ENCODE measurements at regions of chr4 and their contacts with region 1.

Region 1: GRCh38 chr4:123396307-123397143 is at the start of gene SPRY1:
- DNase-seq: peak; percentile 66
- ATAC-seq: peak; percentile 49
- H3K4me3 ChIP-seq: peak within 1 kb of the TSS; percentile 63
- H3K27ac ChIP-seq: no peak within 1 kb of the TSS
- H3K4me1 ChIP-seq: peaks cover 7% of the 10 kb centered on the region; the same call in 1 of the 2 replicates
- H3K27me3 ChIP-seq: peaks cover 6 to 11% of the 10 kb centered on the region in 2 experiments; a peak in 3 of 4 replicates
- CTCF ChIP-seq: no peak
- EP300 ChIP-seq: no peak
- POLR2A ChIP-seq: no peak
- RAD21 ChIP-seq: no peak
- polyA plus RNA-seq, gene SPRY1: 0.05 TPM in 1 of 2 experiments, not detected in the other

Region 2: DNA sequence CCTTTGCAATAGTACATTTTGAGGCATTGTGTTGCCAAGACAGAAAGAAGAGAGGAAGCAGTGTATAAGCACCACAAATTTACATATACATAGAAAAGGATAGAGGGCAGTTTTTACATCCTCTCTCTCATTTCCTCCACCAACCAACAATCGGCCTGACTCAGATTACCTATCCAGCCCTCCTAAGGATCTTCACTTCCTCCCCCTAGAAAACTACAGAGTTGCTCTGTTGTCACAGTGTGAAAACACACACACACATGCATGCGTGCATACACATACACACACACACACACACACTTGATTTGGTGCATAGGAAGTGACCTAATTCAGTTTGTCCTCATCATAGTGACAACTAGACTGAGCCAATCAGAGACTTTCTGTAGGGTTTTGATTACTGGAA is 98.7 kb before region 1 on chr4:
- CTCF ChIA-PET with region 1: no interaction called
- POLR2A ChIA-PET with region 1: no interaction called
- RAD21 ChIA-PET with region 1: no interaction called
- SMC1A ChIA-PET with region 1: no interaction called
- in situ Hi-C with region 1: no loop called
- intact Hi-C with region 1: no loop called
- DNase-seq: no peak
- ATAC-seq: peak; percentile 45
- H3K4me3 ChIP-seq: no peak overlapping the region
- H3K27ac ChIP-seq: no peak overlapping the region
- H3K4me1 ChIP-seq: no peaks in the 10 kb centered on the region
- H3K27me3 ChIP-seq: no peaks in the 10 kb centered on the region
- CTCF ChIP-seq: no peak
- EP300 ChIP-seq: no peak
- POLR2A ChIP-seq: no peak
- RAD21 ChIP-seq: no peak

Region 3: GRCh38 chr4:123352240-123352945 is 44.1 kb before region 1 on chr4:
- CTCF ChIA-PET with region 1: no interaction called
- POLR2A ChIA-PET with region 1: no interaction called
- RAD21 ChIA-PET with region 1: no interaction called
- SMC1A ChIA-PET with region 1: no interaction called
- in situ Hi-C with region 1: no loop called
- intact Hi-C with region 1: no loop called
- DNase-seq: no peak
- ATAC-seq: no peak; the same call in 2 of the 3 replicates
- H3K4me3 ChIP-seq: no peak overlapping the region
- H3K27ac ChIP-seq: no peak overlapping the region
- H3K4me1 ChIP-seq: no peaks in the 10 kb centered on the region
- H3K27me3 ChIP-seq: no peaks in the 10 kb centered on the region; a peak in 1 of 4 replicates
- CTCF ChIP-seq: no peak
- EP300 ChIP-seq: no peak
- POLR2A ChIP-seq: no peak
- RAD21 ChIP-seq: no peak

Region 4: DNA sequence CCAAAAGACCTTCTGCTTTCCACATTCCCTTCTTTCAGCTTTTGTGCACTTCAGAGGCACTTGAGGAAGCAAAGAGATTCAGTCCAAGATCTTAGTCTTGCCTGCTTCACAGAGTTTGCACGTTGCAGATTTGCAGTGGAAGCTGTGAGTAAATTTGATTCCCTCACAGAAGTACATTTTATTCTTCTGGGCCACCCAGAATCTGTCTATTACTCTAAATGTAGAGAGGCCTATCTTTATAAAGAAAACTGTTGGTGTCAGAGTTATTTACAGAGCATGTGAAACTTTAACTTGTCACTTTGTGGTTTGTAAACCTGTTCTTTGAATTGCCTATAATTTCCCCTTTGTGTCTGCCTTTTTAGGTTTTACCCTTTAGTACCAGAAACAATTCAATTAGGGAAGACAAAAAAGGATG is 15.6 kb after region 1 on chr4:
- CTCF ChIA-PET with region 1: interaction called, 67 read pairs
- POLR2A ChIA-PET with region 1: interaction called, 21 read pairs
- RAD21 ChIA-PET with region 1: interaction called, 66 read pairs
- SMC1A ChIA-PET with region 1: interaction called, 45 read pairs
- in situ Hi-C with region 1: no loop called
- intact Hi-C with region 1: no loop called
- DNase-seq: peak; percentile 66
- ATAC-seq: peak; percentile 90
- H3K4me3 ChIP-seq: no peak overlapping the region
- H3K27ac ChIP-seq: peak overlapping the region; percentile 34; the same call in 1 of the 2 replicates
- H3K4me1 ChIP-seq: peaks cover 17% of the 10 kb centered on the region
- H3K27me3 ChIP-seq: no peaks in the 10 kb centered on the region
- CTCF ChIP-seq: no peak
- EP300 ChIP-seq: peak in 1 of 2 experiments; percentile 64; a peak in 2 of 4 replicates
- POLR2A ChIP-seq: no peak
- RAD21 ChIP-seq: no peak

Region 5: GRCh38 chr4:123423819-123424218 is 27.3 kb after region 1 on chr4:
- CTCF ChIA-PET with region 1: interaction called, 12 read pairs
- POLR2A ChIA-PET with region 1: interaction called, 3 read pairs
- RAD21 ChIA-PET with region 1: interaction called, 16 read pairs
- SMC1A ChIA-PET with region 1: interaction called, 16 read pairs
- in situ Hi-C with region 1: no loop called
- intact Hi-C with region 1: no loop called
- DNase-seq: no peak
- ATAC-seq: no peak
- H3K4me3 ChIP-seq: no peak overlapping the region
- H3K27ac ChIP-seq: no peak overlapping the region
- H3K4me1 ChIP-seq: peaks cover 5% of the 10 kb centered on the region; the same call in 1 of the 2 replicates
- H3K27me3 ChIP-seq: no peaks in the 10 kb centered on the region
- CTCF ChIP-seq: no peak
- EP300 ChIP-seq: no peak
- POLR2A ChIP-seq: no peak
- RAD21 ChIP-seq: no peak

Region 6: DNA sequence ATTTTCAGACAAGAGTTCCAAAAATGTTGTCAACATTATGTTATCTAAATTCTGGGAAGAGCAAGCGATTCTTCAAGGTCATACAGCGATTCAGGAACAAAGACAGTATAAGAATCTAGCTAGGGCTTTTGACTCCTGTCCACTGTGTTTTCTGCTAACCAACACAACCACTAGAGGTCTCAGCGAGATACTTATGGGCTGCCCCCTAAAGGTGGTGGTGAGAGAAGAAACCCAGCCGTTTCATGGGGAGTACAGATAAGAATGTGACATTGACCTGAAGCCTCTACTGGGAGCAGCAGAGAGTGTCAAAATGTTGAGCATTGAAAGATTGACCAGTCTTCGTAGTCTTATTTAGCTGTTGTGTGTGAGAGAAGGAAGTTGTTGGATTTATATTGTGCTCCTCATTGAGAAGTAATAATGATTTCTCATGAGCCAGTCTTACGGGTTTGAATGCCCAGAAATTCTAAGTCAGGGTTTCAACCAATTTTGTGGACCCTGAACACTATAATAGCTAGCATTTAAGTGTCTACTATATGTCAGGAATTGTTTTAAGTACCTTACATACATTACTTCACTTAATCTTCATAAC is 168.3 kb after region 1 on chr4:
- CTCF ChIA-PET with region 1: interaction called, 35 read pairs
- POLR2A ChIA-PET with region 1: interaction called, 3 read pairs
- RAD21 ChIA-PET with region 1: interaction called, 30 read pairs
- SMC1A ChIA-PET with region 1: interaction called, 28 read pairs
- in situ Hi-C with region 1: no loop called
- intact Hi-C with region 1: loop called (anchors 2 kb)
- DNase-seq: peak; percentile 43
- ATAC-seq: peak; percentile 100
- H3K4me3 ChIP-seq: no peak overlapping the region
- H3K27ac ChIP-seq: no peak overlapping the region
- H3K4me1 ChIP-seq: no peaks in the 10 kb centered on the region
- H3K27me3 ChIP-seq: no peaks in the 10 kb centered on the region
- CTCF ChIP-seq: peak; percentile 94 to 99 (median 95)
- EP300 ChIP-seq: no peak
- POLR2A ChIP-seq: no peak
- RAD21 ChIP-seq: peak; percentile 86

Region 7: GRCh38 chr4:123661080-123661737 is 264.7 kb after region 1 on chr4:
- CTCF ChIA-PET with region 1: interaction called, 122 read pairs
- POLR2A ChIA-PET with region 1: no interaction called
- RAD21 ChIA-PET with region 1: interaction called, 60 read pairs
- SMC1A ChIA-PET with region 1: interaction called, 74 read pairs
- in situ Hi-C with region 1: loop called (anchors 5 kb)
- intact Hi-C with region 1: loop called (anchors 2 kb)
- DNase-seq: no peak
- ATAC-seq: no peak
- H3K4me3 ChIP-seq: no peak overlapping the region
- H3K27ac ChIP-seq: no peak overlapping the region
- H3K4me1 ChIP-seq: no peaks in the 10 kb centered on the region
- H3K27me3 ChIP-seq: peaks cover 0 to 2% of the 10 kb centered on the region in 2 experiments; a peak in 1 of 4 replicates
- CTCF ChIP-seq: peak in 2 of 3 experiments; percentile 21 to 38; a peak in 3 of 6 replicates
- EP300 ChIP-seq: no peak
- POLR2A ChIP-seq: no peak
- RAD21 ChIP-seq: peak; percentile 51

Region 8: GRCh38 chr4:124322234-124323065 is 925.9 kb after region 1 on chr4:
- CTCF ChIA-PET with region 1: no interaction called
- POLR2A ChIA-PET with region 1: no interaction called
- RAD21 ChIA-PET with region 1: no interaction called
- SMC1A ChIA-PET with region 1: no interaction called
- in situ Hi-C with region 1: no loop called
- intact Hi-C with region 1: loop called (anchors 10 kb)
- DNase-seq: no peak
- ATAC-seq: peak; percentile 20; the same call in 1 of the 3 replicates
- H3K4me3 ChIP-seq: no peak overlapping the region
- H3K27ac ChIP-seq: no peak overlapping the region
- H3K4me1 ChIP-seq: no peaks in the 10 kb centered on the region
- H3K27me3 ChIP-seq: no peaks in the 10 kb centered on the region
- CTCF ChIP-seq: peak in 2 of 3 experiments; percentile 51 to 53; a peak in 4 of 6 replicates
- EP300 ChIP-seq: no peak
- POLR2A ChIP-seq: no peak
- RAD21 ChIP-seq: peak; percentile 44

Region 9: GRCh38 chr4:124958847-124959246 is 1562.3 kb after region 1 on chr4:
- CTCF ChIA-PET with region 1: no interaction called
- POLR2A ChIA-PET with region 1: no interaction called
- RAD21 ChIA-PET with region 1: no interaction called
- SMC1A ChIA-PET with region 1: no interaction called
- in situ Hi-C with region 1: no loop called
- intact Hi-C with region 1: no loop called
- DNase-seq: no peak
- ATAC-seq: peak; percentile 61
- H3K4me3 ChIP-seq: no peak overlapping the region
- H3K27ac ChIP-seq: no peak overlapping the region
- H3K4me1 ChIP-seq: no peaks in the 10 kb centered on the region
- H3K27me3 ChIP-seq: no peaks in the 10 kb centered on the region
- CTCF ChIP-seq: no peak
- EP300 ChIP-seq: no peak
- POLR2A ChIP-seq: no peak
- RAD21 ChIP-seq: no peak